Activated CD4-positive, alpha-beta memory T cell treated with anti-CD3 and anti-CD28 coated beads for 36 hours (primary cell): ENCODE measurements at regions of chr12 and their contacts with region 1.

Region 1: DNA sequence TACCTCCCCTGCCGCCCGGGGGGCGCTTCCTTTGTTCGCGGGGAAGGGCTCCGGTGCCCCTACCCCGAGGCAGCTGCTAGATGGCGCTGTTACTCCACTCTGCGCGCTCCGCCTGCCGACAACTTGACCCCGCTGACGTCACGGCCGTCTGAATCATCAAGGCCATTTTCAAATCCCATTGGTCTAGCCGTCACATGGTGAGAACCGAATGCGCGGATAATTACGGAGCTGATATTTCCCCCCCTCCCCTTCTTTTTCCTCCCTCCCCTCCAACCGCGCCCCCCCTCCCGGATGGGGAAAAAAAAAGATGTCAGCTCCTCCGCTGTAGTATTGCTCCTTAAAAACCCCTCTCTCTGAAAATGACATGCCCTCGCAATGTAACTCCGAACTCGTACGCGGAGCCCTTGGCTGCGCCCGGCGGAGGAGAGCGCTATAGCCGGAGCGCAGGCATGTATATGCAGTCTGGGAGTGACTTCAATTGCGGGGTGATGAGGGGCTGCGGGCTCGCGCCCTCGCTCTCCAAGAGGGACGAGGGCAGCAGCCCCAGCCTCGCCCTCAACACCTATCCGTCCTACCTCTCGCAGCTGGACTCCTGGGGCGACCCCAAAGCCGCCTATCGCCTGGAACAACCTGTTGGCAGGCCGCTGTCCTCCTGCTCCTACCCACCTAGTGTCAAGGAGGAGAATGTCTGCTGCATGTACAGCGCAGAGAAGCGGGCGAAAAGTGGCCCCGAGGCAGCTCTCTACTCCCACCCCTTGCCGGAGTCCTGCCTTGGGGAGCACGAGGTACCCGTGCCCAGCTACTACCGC is at the start of gene HOXC10:
- DNase-seq: peak; percentile 92
- H3K4me3 Mint-ChIP-seq: peak within 1 kb of the TSS; percentile 52
- H3K27ac Mint-ChIP-seq: no peak within 1 kb of the TSS
- H3K4me1 Mint-ChIP-seq: peaks cover 25% of the 10 kb centered on the region
- H3K27me3 Mint-ChIP-seq: peaks cover 87% of the 10 kb centered on the region
- total RNA-seq, gene HOXC10: not detected

Region 2: GRCh38 chr12:53952871-53953734 is 32.0 kb before region 1 on chr12:
- CTCF ChIA-PET with region 1: interaction called, 4 read pairs
- POLR2A ChIA-PET with region 1: no interaction called
- intact Hi-C with region 1: loop called (anchors 5 kb)
- DNase-seq: no peak
- H3K4me3 Mint-ChIP-seq: peak overlapping the region; percentile 25
- H3K27ac Mint-ChIP-seq: no peak overlapping the region
- H3K4me1 Mint-ChIP-seq: peaks cover 19% of the 10 kb centered on the region
- H3K27me3 Mint-ChIP-seq: peaks cover 85% of the 10 kb centered on the region

Region 3: GRCh38 chr12:53995378-53996239 is 10.5 kb after region 1 on chr12:
- CTCF ChIA-PET with region 1: interaction called, 20 read pairs
- POLR2A ChIA-PET with region 1: interaction called, 3 read pairs
- intact Hi-C with region 1: loop called (anchors 1 kb)
- DNase-seq: peak; percentile 44
- H3K4me3 Mint-ChIP-seq: peak overlapping the region; percentile 73
- H3K27ac Mint-ChIP-seq: no peak overlapping the region
- H3K4me1 Mint-ChIP-seq: peaks cover 30% of the 10 kb centered on the region
- H3K27me3 Mint-ChIP-seq: peaks cover 82% of the 10 kb centered on the region

Region 4: DNA sequence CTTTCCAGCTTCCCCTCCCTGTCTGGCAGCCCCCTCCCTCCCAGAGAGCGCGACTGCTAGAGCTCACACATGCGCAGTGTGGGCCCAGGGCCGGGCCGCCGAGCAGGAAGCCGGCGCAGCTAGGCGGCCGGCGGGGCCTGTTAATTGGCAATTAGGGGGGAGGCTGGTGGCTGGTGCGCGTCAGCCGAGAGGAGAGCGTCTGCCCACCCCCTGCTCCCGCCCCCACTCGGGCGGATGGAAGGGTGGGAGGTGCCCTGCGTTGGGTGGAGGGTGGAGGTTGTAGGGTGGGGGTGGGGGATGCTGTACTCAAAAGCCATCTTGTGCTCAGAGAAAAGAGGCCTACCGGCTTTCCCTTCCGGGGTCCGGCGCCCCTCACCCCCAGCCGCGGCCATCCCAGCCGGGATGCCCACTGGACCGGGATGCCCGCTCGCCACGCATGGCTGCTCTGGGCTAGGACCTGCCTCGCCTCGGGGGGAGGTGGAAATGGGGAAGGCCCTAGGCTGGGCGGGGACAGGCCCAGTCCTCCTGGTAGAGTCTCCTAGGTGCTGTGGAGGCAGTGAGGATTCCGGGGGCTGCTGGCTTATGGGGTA is 32.9 kb after region 1 on chr12:
- CTCF ChIA-PET with region 1: interaction called, 11 read pairs
- POLR2A ChIA-PET with region 1: no interaction called
- intact Hi-C with region 1: loop called (anchors 5 kb)
- DNase-seq: peak; percentile 73
- H3K4me3 Mint-ChIP-seq: peak overlapping the region; percentile 72
- H3K27ac Mint-ChIP-seq: no peak overlapping the region
- H3K4me1 Mint-ChIP-seq: peaks cover 19% of the 10 kb centered on the region
- H3K27me3 Mint-ChIP-seq: peaks cover 69% of the 10 kb centered on the region

Region 5: GRCh38 chr12:54191550-54192022 is 206.5 kb after region 1 on chr12:
- CTCF ChIA-PET with region 1: interaction called, 34 read pairs
- POLR2A ChIA-PET with region 1: no interaction called
- intact Hi-C with region 1: no loop called
- DNase-seq: peak; percentile 83
- H3K4me3 Mint-ChIP-seq: no peak overlapping the region
- H3K27ac Mint-ChIP-seq: no peak overlapping the region
- H3K4me1 Mint-ChIP-seq: peaks cover 17% of the 10 kb centered on the region
- H3K27me3 Mint-ChIP-seq: peaks cover 24% of the 10 kb centered on the region

Region 6: DNA sequence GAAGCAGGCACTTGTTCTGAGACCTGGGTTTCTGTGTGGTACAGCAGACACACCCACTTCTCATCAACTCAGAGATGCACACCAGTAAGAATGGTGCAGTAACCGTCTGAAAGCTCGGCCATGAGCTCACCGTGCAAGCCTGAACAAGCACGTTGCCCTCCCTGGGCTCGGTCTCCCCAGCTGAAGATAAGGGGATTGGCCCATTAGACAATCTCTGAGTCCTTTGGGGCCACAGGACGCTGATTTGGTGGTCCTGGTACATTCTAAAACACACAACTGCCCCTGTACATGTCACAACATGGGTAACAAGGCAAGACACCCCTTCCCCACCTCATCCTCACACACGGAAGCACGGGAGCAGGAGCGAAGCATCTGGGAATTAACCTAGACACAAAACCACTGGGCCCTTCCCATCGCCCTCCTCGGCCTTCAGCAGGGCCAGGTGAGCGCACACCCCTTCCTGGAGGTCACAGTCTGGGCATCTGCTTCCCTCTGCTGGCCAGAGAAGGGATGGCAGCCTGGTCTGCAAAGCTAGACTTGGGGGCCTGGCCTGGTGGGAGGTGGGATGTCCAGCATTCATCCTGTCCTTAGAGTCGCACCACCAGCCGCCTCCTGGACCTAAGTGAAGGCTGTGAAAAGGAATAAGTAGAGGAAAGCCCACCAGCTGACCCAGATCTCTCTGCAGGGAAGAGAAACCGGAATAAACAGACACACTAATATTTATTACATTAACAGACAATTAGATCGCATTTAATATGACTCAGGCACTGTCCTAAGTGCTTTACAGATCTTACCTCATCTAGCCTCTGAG is 222.6 kb after region 1 on chr12:
- CTCF ChIA-PET with region 1: interaction called, 46 read pairs
- POLR2A ChIA-PET with region 1: no interaction called
- intact Hi-C with region 1: no loop called
- DNase-seq: peak; percentile 86
- H3K4me3 Mint-ChIP-seq: no peak overlapping the region
- H3K27ac Mint-ChIP-seq: no peak overlapping the region
- H3K4me1 Mint-ChIP-seq: no peaks in the 10 kb centered on the region
- H3K27me3 Mint-ChIP-seq: peaks cover 19% of the 10 kb centered on the region